CD8-positive, alpha-beta memory T cell (primary cell): ENCODE measurements at regions of chr19 and their contacts with region 1.

Region 1: GRCh38 chr19:35352448-35353304 is 5.0 kb downstream of the FFAR1 start:
- DNase-seq: peak; percentile 53 to 78 (median 62)
- H3K4me3 ChIP-seq: no peak overlapping the region
- H3K4me3 Mint-ChIP-seq: no peak overlapping the region
- H3K27ac ChIP-seq: no peak overlapping the region
- H3K27ac Mint-ChIP-seq: peak overlapping the region in 1 of 8 donors; percentile 38
- H3K4me1 ChIP-seq: peaks cover 11% of the 10 kb centered on the region
- H3K4me1 Mint-ChIP-seq: peaks cover 9 to 14% (median 12%) of the 10 kb centered on the region in 3 donors
- H3K27me3 ChIP-seq: no peaks in the 10 kb centered on the region
- H3K27me3 Mint-ChIP-seq: peaks cover 4 to 5% of the 10 kb centered on the region in 2 donors

Region 2: DNA sequence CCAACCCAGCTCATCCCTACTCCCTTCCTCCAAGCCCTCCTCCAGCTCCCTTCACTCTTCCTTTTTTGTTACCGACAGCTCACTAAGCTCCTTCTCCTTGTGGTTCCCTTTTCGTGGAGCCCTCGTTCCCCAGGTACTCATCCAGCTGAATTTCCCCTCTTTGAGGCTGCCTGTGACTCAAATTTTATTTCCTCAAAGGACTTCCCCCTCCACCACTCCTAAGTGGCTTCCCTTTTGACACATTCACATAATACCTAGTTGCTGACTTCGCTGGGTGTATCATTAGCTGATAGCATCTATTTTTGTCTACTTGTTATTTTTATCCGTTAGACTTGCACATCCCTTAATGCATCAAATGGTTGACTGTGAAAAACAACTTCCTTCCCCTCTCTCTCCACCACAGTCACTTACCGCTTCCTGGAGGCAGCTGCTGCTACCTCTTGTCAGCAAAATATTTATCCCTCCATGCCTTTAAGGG is 109.8 kb after region 1 on chr19:
- CTCF ChIA-PET with region 1: interaction called, 37 read pairs
- POLR2A ChIA-PET with region 1: no interaction called
- DNase-seq: peak; percentile 54 to 87 (median 80)
- H3K4me3 ChIP-seq: peak overlapping the region; percentile 21
- H3K4me3 Mint-ChIP-seq: peak overlapping the region; percentile 2 to 85 (median 84)
- H3K27ac ChIP-seq: peak overlapping the region; percentile 48
- H3K27ac Mint-ChIP-seq: peak overlapping the region; percentile 77 to 99 (median 96)
- H3K4me1 ChIP-seq: peaks cover 38% of the 10 kb centered on the region
- H3K4me1 Mint-ChIP-seq: peaks cover 45 to 57% (median 50%) of the 10 kb centered on the region in 3 donors
- H3K27me3 ChIP-seq: no peaks in the 10 kb centered on the region
- H3K27me3 Mint-ChIP-seq: peaks cover 0 to 2% of the 10 kb centered on the region in 2 donors

Region 3: DNA sequence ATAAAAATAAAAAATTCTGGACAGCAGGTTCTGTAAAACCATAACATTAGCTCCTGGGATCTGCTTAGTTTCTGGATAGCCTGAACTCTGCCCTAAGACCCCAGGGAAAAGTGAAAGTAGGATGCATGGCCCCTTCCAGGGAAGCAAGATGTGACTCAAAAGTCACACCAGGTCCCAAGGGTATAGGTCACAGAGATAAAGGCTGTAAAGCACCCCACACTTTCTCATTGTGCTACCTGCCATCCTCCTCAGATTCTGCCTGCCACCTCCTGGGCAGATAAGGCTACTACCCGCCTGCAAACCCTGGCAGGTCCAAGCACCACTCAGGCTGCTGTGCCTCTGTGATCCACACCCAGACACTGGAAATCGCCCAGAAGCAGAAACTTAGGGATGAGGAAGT is 116.0 kb after region 1 on chr19:
- CTCF ChIA-PET with region 1: interaction called, 37 read pairs
- POLR2A ChIA-PET with region 1: no interaction called
- DNase-seq: peak; percentile 49 to 78 (median 61)
- H3K4me3 ChIP-seq: no peak overlapping the region
- H3K4me3 Mint-ChIP-seq: no peak overlapping the region
- H3K27ac ChIP-seq: no peak overlapping the region
- H3K27ac Mint-ChIP-seq: peak overlapping the region in 2 of 8 donors; percentile 21 to 38
- H3K4me1 ChIP-seq: peaks cover 5% of the 10 kb centered on the region
- H3K4me1 Mint-ChIP-seq: peaks cover 19 to 27% (median 20%) of the 10 kb centered on the region in 3 donors
- H3K27me3 ChIP-seq: no peaks in the 10 kb centered on the region
- H3K27me3 Mint-ChIP-seq: peaks cover 0 to 3% of the 10 kb centered on the region in 2 donors

Region 4: GRCh38 chr19:35495107-35496064 is 142.7 kb after region 1 on chr19:
- CTCF ChIA-PET with region 1: interaction called, 35 read pairs
- POLR2A ChIA-PET with region 1: no interaction called
- DNase-seq: peak; percentile 42 to 76 (median 46)
- H3K4me3 ChIP-seq: no peak overlapping the region
- H3K4me3 Mint-ChIP-seq: peak overlapping the region in 1 of 7 donors; percentile 24
- H3K27ac ChIP-seq: no peak overlapping the region
- H3K27ac Mint-ChIP-seq: peak overlapping the region in 2 of 8 donors; percentile 6 to 61
- H3K4me1 ChIP-seq: peaks cover 5% of the 10 kb centered on the region
- H3K4me1 Mint-ChIP-seq: peaks cover 0 to 8% (median 5%) of the 10 kb centered on the region in 3 donors
- H3K27me3 ChIP-seq: no peaks in the 10 kb centered on the region
- H3K27me3 Mint-ChIP-seq: peaks cover 18 to 28% of the 10 kb centered on the region in 2 donors